ENCODE measurements at regions of chr19 and their contacts with region 1.

Region 1: DNA sequence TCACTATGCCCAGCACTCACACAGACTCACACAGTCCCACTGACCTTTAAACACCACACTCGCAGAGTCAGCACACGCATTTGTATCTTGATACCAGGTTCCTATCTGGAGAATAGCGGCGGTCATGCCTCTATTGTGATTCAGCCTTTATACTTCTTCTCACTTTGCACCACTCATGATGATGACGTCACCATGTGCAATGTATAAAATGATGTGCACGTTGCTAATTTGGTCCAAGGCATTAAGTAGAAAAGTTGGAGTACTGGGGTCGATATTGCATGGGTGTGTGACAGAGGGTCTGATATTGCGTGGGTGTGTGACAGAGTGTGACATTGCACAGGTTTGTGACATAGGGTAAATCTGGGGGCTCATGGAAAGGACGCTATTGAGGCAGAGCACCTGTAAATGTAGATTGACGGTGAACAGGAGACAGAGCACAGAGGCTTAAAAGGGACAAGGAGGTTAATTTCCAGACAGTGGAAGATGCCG is 4.5 kb upstream of the VN1R4 start:
- DNase-seq: no peak
- H3K4me3 ChIP-seq: no peak overlapping the region
- H3K4me3 Mint-ChIP-seq: no peak overlapping the region
- H3K27ac ChIP-seq: no peak overlapping the region
- H3K27ac Mint-ChIP-seq: no peak overlapping the region
- H3K4me1 ChIP-seq: no peaks in the 10 kb centered on the region
- H3K4me1 Mint-ChIP-seq: no peaks in the 10 kb centered on the region
- H3K27me3 ChIP-seq: no peaks in the 10 kb centered on the region
- H3K27me3 Mint-ChIP-seq: no peaks in the 10 kb centered on the region
- CTCF ChIP-seq: no peak

Region 2: GRCh38 chr19:53212703-53213320 is 59.2 kb before region 1 on chr19:
- intact Hi-C with region 1: no loop called
- DNase-seq: no peak
- H3K4me3 ChIP-seq: peak overlapping the region in 1 of 3 experiments; percentile 29
- H3K4me3 Mint-ChIP-seq: no peak overlapping the region
- H3K27ac ChIP-seq: no peak overlapping the region
- H3K27ac Mint-ChIP-seq: no peak overlapping the region
- H3K4me1 ChIP-seq: no peaks in the 10 kb centered on the region
- H3K4me1 Mint-ChIP-seq: no peaks in the 10 kb centered on the region
- H3K27me3 ChIP-seq: no peaks in the 10 kb centered on the region
- H3K27me3 Mint-ChIP-seq: peaks cover 0 to 1% (median 0%) of the 10 kb centered on the region in 3 donors
- CTCF ChIP-seq: no peak

Region 3: DNA sequence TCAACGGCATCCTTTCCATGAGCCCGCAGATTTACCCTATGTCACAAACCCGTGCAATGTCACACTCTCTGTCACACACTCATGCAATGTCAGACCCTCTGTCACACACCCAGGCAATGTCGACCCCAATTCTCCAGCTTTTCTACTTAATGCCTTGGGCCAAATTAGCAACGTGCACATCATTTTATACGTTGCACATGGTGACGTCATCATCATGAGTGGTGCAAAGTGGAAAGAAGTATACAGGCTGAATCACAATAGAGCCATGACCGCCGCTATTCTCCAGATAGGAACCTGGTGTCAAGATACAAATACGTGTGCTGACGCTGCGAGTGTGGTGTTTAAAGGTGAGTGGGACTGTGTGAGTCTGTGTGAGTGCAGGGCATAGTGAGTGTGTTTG is 39.9 kb after region 1 on chr19:
- intact Hi-C with region 1: loop called in 1 of 2 experiments (anchors 2 kb)
- DNase-seq: no peak
- H3K4me3 ChIP-seq: no peak overlapping the region
- H3K4me3 Mint-ChIP-seq: no peak overlapping the region
- H3K27ac ChIP-seq: no peak overlapping the region
- H3K27ac Mint-ChIP-seq: no peak overlapping the region
- H3K4me1 ChIP-seq: no peaks in the 10 kb centered on the region
- H3K4me1 Mint-ChIP-seq: no peaks in the 10 kb centered on the region
- H3K27me3 ChIP-seq: peaks cover 0 to 12% of the 10 kb centered on the region in 2 donors
- H3K27me3 Mint-ChIP-seq: peaks cover 0 to 11% (median 0%) of the 10 kb centered on the region in 3 donors
- CTCF ChIP-seq: no peak

Measured in CD14-positive monocyte (primary cell).